Naive thymus-derived CD8-positive, alpha-beta T cell (primary cell): ENCODE measurements at regions of chr11 and their contacts with region 1.

Region 1: DNA sequence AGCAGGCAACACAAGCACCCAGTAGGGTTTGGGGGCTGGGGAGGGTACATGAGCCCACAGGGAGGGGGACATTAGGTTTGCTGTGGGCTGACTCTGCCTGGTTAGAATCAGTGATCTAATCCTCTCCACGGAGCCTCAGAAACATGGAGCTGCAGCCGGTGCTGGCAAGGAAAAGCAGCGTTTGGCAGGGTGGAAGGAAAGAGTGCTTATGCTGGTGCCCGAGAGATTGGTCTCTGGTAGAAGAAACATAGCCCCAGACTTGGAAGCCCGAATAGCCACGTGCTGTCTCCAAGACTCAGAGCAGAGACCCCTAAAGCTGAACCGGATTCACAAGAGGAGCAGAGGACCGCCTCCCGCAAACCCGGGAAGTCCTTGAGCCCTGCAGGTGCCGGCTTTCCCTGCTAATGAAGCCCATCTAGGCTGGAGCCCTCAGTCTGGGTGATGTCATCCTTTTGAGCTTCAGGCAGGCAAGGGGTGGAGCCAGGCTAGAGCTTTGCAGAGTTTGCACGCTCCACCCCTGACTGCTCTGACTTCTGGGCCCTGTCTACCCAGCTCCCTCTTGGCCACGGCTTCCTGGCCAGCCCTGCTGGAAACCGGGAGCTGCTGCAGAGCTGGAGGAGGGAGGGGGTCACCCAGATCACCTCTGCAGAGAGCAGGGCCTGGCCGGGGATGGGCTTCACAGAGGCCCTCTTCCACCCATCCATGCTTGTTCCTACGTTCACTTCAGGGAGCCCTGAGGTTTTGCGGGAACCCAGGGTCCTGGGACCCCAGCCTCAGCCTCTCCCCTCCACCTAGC is 35.0 kb upstream of the JAM3 start:
- DNase-seq: peak; percentile 50 to 83 (median 64)
- ATAC-seq: peak; percentile 76 to 82
- H3K4me3 Mint-ChIP-seq: peak overlapping the region; percentile 61 to 94 (median 77)
- H3K27ac Mint-ChIP-seq: peak overlapping the region; percentile 75 to 99 (median 95)
- H3K4me1 Mint-ChIP-seq: peaks cover 50 to 90% (median 78%) of the 10 kb centered on the region in 4 donors
- H3K27me3 Mint-ChIP-seq: peaks cover 0 to 10% (median 0%) of the 10 kb centered on the region in 5 donors

Region 2: GRCh38 chr11:133956650-133957633 is 77.0 kb before region 1 on chr11 and contains the start of gene IGSF9B:
- POLR2A ChIA-PET with region 1: interaction called, 11 read pairs
- DNase-seq: peak; percentile 83 to 94 (median 91)
- ATAC-seq: peak; percentile 94 to 95
- H3K4me3 Mint-ChIP-seq: peak within 1 kb of the TSS; percentile 87 to 95 (median 92)
- H3K27ac Mint-ChIP-seq: peak within 1 kb of the TSS; percentile 58 to 95 (median 93)
- H3K4me1 Mint-ChIP-seq: peaks cover 22 to 44% (median 40%) of the 10 kb centered on the region in 4 donors
- H3K27me3 Mint-ChIP-seq: peaks cover 0 to 29% (median 6%) of the 10 kb centered on the region in 5 donors
- polyA plus RNA-seq, gene IGSF9B: 0.35 to 2.2 (median 0.81) TPM

Region 3: GRCh38 chr11:134045782-134046635 is 12.1 kb after region 1 on chr11:
- POLR2A ChIA-PET with region 1: interaction called, 67 read pairs
- DNase-seq: peak in 7 of 10 donors; percentile 36 to 73 (median 47)
- ATAC-seq: peak; percentile 78 to 82
- H3K4me3 Mint-ChIP-seq: no peak overlapping the region
- H3K27ac Mint-ChIP-seq: peak overlapping the region in 4 of 10 donors; percentile 49 to 83 (median 65)
- H3K4me1 Mint-ChIP-seq: peaks cover 4 to 20% (median 15%) of the 10 kb centered on the region in 4 donors
- H3K27me3 Mint-ChIP-seq: peaks cover 3 to 10% (median 7%) of the 10 kb centered on the region in 5 donors